ENCODE measurements at regions of chr14 and their contacts with region 1.

Region 1: GRCh38 chr14:68676511-68676943 is 116.3 kb downstream of the ZFP36L1 start:
- DNase-seq: no peak
- H3K4me3 ChIP-seq: no peak overlapping the region
- H3K27ac ChIP-seq: no peak overlapping the region
- H3K4me1 ChIP-seq: peaks cover 0 to 2% (median under 1%) of the 10 kb centered on the region in 4 experiments; a peak in 2 of 7 replicates
- H3K27me3 ChIP-seq: no peaks in the 10 kb centered on the region
- CTCF ChIP-seq: no peak
- EP300 ChIP-seq: no peak
- POLR2A ChIP-seq: no peak
- RAD21 ChIP-seq: no peak

Region 2: GRCh38 chr14:68466491-68467032 is 210.0 kb before region 1 on chr14:
- CTCF ChIA-PET with region 1: no interaction called
- POLR2A ChIA-PET with region 1: no interaction called
- DNase-seq: no peak
- H3K4me3 ChIP-seq: no peak overlapping the region
- H3K27ac ChIP-seq: no peak overlapping the region
- H3K4me1 ChIP-seq: peaks cover 10 to 22% (median 15%) of the 10 kb centered on the region in 4 experiments
- H3K27me3 ChIP-seq: no peaks in the 10 kb centered on the region
- CTCF ChIP-seq: no peak
- EP300 ChIP-seq: no peak
- POLR2A ChIP-seq: no peak
- RAD21 ChIP-seq: no peak

Region 3: DNA sequence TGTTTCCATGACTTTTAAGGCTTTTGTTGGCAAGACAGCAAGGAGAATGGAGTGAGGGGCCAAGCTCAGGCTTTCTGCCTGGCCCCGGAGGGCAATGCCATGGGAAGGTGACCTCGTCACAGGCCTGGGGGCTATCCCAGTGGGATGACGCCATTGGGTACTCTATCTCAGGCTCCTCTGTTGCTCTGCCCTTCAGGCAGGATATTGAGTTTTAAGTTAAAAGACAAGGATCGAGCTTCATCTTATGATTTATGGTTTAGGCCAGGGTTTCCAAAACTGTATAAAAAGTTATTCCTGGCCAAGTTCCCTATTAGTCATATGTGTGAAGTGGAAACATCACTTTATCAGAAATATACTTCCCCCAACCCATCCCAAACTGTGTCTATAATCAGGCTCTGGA is 11.4 kb before region 1 on chr14:
- CTCF ChIA-PET with region 1: interaction called, 11 read pairs
- POLR2A ChIA-PET with region 1: no interaction called
- DNase-seq: peak in 1 of 2 experiments; percentile 20
- H3K4me3 ChIP-seq: no peak overlapping the region
- H3K27ac ChIP-seq: no peak overlapping the region
- H3K4me1 ChIP-seq: no peaks in the 10 kb centered on the region; a peak in 1 of 7 replicates
- H3K27me3 ChIP-seq: no peaks in the 10 kb centered on the region
- CTCF ChIP-seq: no peak
- EP300 ChIP-seq: no peak
- POLR2A ChIP-seq: no peak
- RAD21 ChIP-seq: no peak

Region 4: GRCh38 chr14:68703093-68703492 is 26.6 kb after region 1 on chr14:
- CTCF ChIA-PET with region 1: no interaction called
- POLR2A ChIA-PET with region 1: no interaction called
- DNase-seq: no peak
- H3K4me3 ChIP-seq: no peak overlapping the region
- H3K27ac ChIP-seq: no peak overlapping the region
- H3K4me1 ChIP-seq: 0 out of 7 replicates have a peak, but pooled peaks cover 0 to 3% (median 1%) of the 10 kb centered on the region in 4 experiments
- H3K27me3 ChIP-seq: no peaks in the 10 kb centered on the region
- CTCF ChIP-seq: no peak
- EP300 ChIP-seq: no peak
- POLR2A ChIP-seq: no peak
- RAD21 ChIP-seq: no peak

Measured in H1 (cell line).